ENCODE measurements at regions of chr4 and their contacts with region 1.

Region 1: DNA sequence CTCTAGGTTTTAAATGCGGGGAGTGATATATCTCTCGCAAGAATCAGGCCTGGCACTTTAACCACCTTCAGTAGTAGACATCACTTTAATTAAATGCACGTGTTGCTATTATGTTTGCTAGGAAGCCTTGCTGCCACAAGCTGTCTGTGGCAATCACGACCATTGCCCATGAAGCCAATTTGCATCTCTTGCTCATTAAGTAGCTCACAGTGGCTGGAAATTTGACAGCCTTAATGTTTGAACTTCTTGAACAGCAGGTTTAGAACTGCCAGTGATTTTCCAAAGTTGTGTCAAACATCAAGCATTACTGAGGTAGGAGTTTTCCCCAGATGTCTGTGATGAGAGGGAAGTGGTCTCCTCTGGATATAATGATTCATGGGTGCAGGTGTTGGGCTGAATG is 642.3 kb upstream of the CPEB2 start:
- DNase-seq: no peak
- H3K4me3 ChIP-seq: no peak overlapping the region
- H3K27ac ChIP-seq: no peak overlapping the region
- H3K4me1 ChIP-seq: no peaks in the 10 kb centered on the region
- H3K27me3 ChIP-seq: no peaks in the 10 kb centered on the region
- CTCF ChIP-seq: no peak
- POLR2A ChIP-seq: no peak

Region 2: GRCh38 chr4:14152834-14153519 is 207.0 kb before region 1 on chr4:
- CTCF ChIA-PET with region 1: no interaction called
- POLR2A ChIA-PET with region 1: no interaction called
- dilution Hi-C with region 1: no loop called
- intact Hi-C with region 1: no loop called
- DNase-seq: no peak
- H3K4me3 ChIP-seq: no peak overlapping the region
- H3K27ac ChIP-seq: no peak overlapping the region
- H3K4me1 ChIP-seq: no peaks in the 10 kb centered on the region
- H3K27me3 ChIP-seq: peaks cover 6 to 8% of the 10 kb centered on the region in 2 experiments
- CTCF ChIP-seq: no peak
- POLR2A ChIP-seq: no peak

Region 3: GRCh38 chr4:14340321-14340720 is 19.7 kb before region 1 on chr4:
- CTCF ChIA-PET with region 1: no interaction called
- POLR2A ChIA-PET with region 1: no interaction called
- dilution Hi-C with region 1: no loop called
- intact Hi-C with region 1: loop called (anchors 1 kb)
- DNase-seq: no peak
- H3K4me3 ChIP-seq: no peak overlapping the region
- H3K27ac ChIP-seq: no peak overlapping the region
- H3K4me1 ChIP-seq: no peaks in the 10 kb centered on the region
- H3K27me3 ChIP-seq: no peaks in the 10 kb centered on the region
- CTCF ChIP-seq: no peak
- POLR2A ChIP-seq: no peak